Transverse colon (tissue), 4 donors: ENCODE measurements at regions of chr9 and their contacts with region 1.

Region 1: DNA sequence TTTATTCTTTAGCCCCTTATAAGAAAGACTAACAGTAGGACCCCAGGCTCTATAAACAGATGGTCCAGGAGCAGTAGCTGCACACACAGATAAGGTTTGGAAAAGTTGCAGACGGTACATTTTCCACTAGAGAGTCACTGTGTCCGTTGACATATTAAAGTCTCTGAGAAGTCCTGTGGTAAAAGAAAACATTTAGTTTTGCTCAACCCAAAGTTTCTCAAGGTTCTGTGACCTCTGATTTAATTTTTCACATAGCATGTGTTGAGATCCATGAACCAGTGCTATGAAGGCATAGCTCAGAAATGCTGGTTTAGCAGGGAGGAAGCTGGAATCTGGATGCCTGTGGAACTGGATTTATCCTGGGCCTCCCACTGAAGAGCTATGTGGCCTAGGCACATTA is 62.7 kb upstream of the RASEF start:
- DNase-seq: no peak
- H3K4me3 ChIP-seq: no peak overlapping the region
- H3K27ac ChIP-seq: no peak overlapping the region
- H3K4me1 ChIP-seq: no peaks in the 10 kb centered on the region
- H3K27me3 ChIP-seq: no peaks in the 10 kb centered on the region
- CTCF ChIP-seq: no peak
- EP300 ChIP-seq: no peak
- POLR2A ChIP-seq: no peak

Region 2: GRCh38 chr9:82894961-82895821 is 230.5 kb before region 1 on chr9:
- in situ Hi-C with region 1: no loop called
- intact Hi-C with region 1: no loop called
- DNase-seq: peak; percentile 22
- H3K4me3 ChIP-seq: no peak overlapping the region
- H3K27ac ChIP-seq: peak overlapping the region; percentile 40 to 69 (median 64)
- H3K4me1 ChIP-seq: peaks cover 0 to 30% (median 9%) of the 10 kb centered on the region in 4 donors
- H3K27me3 ChIP-seq: no peaks in the 10 kb centered on the region
- CTCF ChIP-seq: no peak
- EP300 ChIP-seq: no peak
- POLR2A ChIP-seq: no peak

Region 3: DNA sequence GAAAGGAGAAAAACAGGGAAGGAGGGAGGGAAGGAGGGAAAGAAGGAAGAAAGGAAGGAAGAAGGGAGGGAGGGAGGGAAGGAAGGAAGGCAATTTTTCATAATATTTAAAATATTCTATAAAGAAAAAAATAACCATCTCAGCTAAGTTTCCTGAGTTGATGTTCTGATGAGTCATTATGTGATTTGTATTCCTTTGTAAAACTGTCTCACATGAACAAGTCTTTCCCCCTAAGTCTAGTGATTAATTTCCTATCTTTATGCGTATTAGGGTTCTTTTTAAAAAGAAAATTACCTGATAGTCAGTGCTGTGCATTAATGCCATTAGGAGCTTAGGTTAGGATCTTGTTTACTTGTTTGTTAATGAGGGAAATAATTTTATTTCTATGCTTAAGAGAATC is 156.9 kb before region 1 on chr9:
- in situ Hi-C with region 1: no loop called
- intact Hi-C with region 1: no loop called
- DNase-seq: no peak
- H3K4me3 ChIP-seq: no peak overlapping the region
- H3K27ac ChIP-seq: no peak overlapping the region
- H3K4me1 ChIP-seq: no peaks in the 10 kb centered on the region
- H3K27me3 ChIP-seq: no peaks in the 10 kb centered on the region
- CTCF ChIP-seq: no peak
- EP300 ChIP-seq: no peak
- POLR2A ChIP-seq: no peak

Region 4: DNA sequence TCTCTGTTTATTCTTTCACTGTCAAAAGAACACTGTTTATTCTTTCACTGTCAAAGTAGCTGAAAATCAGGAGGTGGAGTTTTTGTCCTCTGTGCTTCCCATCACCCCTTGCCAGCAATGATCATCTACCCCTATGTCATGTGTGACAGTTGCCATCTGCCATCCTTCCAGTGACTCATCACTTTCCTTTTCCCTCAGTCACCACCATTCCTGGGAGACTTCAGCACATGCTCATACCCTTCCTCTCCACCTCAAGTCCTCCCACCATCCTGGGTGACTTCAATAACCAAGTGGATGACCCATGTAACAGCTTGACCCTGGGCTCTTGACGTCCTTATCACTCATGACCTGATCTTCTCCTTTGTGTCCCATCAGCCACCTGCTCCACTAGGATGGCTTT is 19.4 kb before region 1 on chr9:
- in situ Hi-C with region 1: no loop called
- intact Hi-C with region 1: loop called (anchors 1 kb)
- DNase-seq: no peak
- H3K4me3 ChIP-seq: no peak overlapping the region
- H3K27ac ChIP-seq: no peak overlapping the region
- H3K4me1 ChIP-seq: no peaks in the 10 kb centered on the region
- H3K27me3 ChIP-seq: no peaks in the 10 kb centered on the region
- CTCF ChIP-seq: no peak
- EP300 ChIP-seq: no peak
- POLR2A ChIP-seq: no peak